Gastrocnemius medialis (tissue), 4 donors: ENCODE measurements at regions of chr4 and their contacts with region 1.

Region 1: DNA sequence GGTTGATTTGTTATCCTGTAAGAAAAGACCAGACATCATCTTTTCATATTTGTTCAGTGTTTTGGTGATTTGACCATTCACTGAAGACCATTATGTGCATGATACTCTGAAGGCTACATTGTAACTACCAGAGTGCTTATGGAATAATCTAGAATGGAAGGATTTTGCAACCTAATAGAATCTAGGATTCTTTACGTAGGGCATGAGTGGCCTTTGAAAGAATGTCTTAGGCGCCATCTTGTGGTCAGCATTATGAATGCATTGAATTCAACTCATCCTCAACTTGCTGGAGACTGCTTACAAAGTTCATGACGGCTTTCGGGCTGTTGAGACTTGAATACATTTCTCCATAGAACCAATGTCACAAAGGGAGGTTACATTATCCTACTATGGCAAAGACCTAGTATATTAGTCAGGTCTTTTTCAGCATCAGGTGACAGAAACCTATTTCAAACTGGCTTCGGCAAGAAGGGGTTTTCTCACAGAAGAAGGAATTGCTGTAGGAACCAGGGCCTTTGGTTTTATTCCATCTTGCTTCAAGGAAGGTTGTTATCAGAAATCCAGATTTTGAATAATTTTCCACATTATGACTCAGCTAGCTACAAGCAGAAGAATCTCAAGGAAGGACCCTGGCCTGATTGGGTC is 104.1 kb downstream of the GPAT3 start:
- DNase-seq: peak; percentile 23 to 41
- ATAC-seq: peak; percentile 89 to 96
- H3K4me3 ChIP-seq: no peak overlapping the region
- H3K27ac ChIP-seq: no peak overlapping the region
- H3K4me1 ChIP-seq: peaks cover 0 to 3% of the 10 kb centered on the region in 2 donors
- H3K27me3 ChIP-seq: no peaks in the 10 kb centered on the region
- CTCF ChIP-seq: peak; percentile 82 to 89 (median 84)
- POLR2A ChIP-seq: no peak

Region 2: GRCh38 chr4:83503974-83504373 is 136.0 kb before region 1 on chr4:
- in situ Hi-C with region 1: no loop called
- intact Hi-C with region 1: loop called (anchors 1 kb)
- DNase-seq: no peak
- ATAC-seq: no peak
- H3K4me3 ChIP-seq: no peak overlapping the region
- H3K27ac ChIP-seq: no peak overlapping the region
- H3K4me1 ChIP-seq: no peaks in the 10 kb centered on the region
- H3K27me3 ChIP-seq: no peaks in the 10 kb centered on the region
- CTCF ChIP-seq: no peak
- POLR2A ChIP-seq: no peak

Region 3: DNA sequence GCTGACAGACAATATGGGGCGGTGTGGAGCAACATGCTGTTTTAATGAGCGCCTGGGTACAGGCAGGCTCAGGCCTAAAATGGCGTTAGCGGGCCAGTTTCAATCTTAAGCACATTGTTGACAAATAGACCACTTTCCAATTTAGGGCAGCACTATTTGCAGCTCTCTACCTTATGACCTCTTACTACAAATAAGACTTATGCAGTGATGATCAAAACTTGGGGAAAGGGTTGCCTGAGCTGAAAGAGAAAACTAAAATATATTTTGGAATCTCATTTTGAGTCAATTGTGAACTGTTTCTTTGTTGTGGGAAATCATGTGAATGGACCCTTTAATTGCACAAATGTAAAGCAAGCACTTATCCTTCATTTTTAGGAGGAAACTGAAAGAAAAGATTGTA is 129.5 kb before region 1 on chr4:
- in situ Hi-C with region 1: loop called (anchors 5 kb)
- intact Hi-C with region 1: loop called (anchors 1 kb)
- DNase-seq: no peak
- ATAC-seq: no peak
- H3K4me3 ChIP-seq: no peak overlapping the region
- H3K27ac ChIP-seq: no peak overlapping the region
- H3K4me1 ChIP-seq: no peaks in the 10 kb centered on the region
- H3K27me3 ChIP-seq: no peaks in the 10 kb centered on the region
- CTCF ChIP-seq: no peak
- POLR2A ChIP-seq: no peak

Region 4: GRCh38 chr4:83701041-83701440 is 61.1 kb after region 1 on chr4:
- in situ Hi-C with region 1: no loop called
- intact Hi-C with region 1: no loop called
- DNase-seq: no peak
- ATAC-seq: no peak
- H3K4me3 ChIP-seq: no peak overlapping the region
- H3K27ac ChIP-seq: no peak overlapping the region
- H3K4me1 ChIP-seq: no peaks in the 10 kb centered on the region
- H3K27me3 ChIP-seq: no peaks in the 10 kb centered on the region
- CTCF ChIP-seq: no peak
- POLR2A ChIP-seq: no peak

Region 5: GRCh38 chr4:83793481-83793880 is 153.5 kb after region 1 on chr4:
- in situ Hi-C with region 1: no loop called
- intact Hi-C with region 1: no loop called
- DNase-seq: no peak
- ATAC-seq: no peak
- H3K4me3 ChIP-seq: no peak overlapping the region
- H3K27ac ChIP-seq: no peak overlapping the region
- H3K4me1 ChIP-seq: no peaks in the 10 kb centered on the region
- H3K27me3 ChIP-seq: no peaks in the 10 kb centered on the region
- CTCF ChIP-seq: no peak
- POLR2A ChIP-seq: no peak

Region 6: DNA sequence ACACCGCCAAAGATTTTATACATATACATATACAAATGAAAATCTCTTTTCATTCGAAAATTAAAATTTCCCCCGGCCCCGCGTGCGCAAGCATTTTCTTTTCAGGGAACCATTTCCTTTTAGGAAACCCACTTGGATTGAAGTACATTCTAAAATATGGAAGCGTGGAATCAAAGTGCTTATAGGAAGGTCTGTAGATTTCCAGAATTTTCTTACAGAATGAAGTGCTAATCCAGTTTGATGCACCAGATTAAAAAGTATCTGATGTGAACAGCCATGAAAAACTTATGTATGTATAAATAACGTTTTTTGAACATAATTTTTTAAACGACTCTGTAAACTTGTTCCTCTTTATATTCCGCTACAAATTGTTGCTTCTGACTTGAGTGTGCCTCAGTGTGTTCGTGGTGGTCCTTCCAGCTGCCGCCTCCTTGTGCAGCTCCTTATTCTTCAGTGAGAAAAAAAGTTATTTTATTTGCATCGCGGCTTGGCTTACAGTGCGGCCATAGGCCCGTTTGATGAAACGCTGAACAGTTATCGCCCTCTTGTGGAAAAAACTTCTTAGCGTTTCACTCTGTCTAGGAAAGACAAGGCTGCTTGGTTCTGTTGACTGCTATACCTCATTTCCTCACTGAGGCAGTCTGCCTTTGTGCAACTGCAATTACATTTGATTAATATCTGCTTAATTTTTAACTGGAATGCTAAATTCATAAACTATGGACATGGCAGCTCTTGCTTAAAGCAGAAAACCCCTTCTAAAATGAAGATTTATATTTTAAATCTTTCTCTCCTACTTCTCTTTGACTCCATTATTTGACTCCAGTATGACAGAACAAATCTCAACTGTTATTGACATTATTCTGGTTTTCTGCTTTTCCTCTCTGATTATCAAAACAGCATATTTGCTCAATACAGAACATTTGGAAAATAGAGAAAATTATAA is 863.8 kb after region 1 on chr4:
- in situ Hi-C with region 1: loop called in 1 of 4 experiments (anchors 10 kb)
- intact Hi-C with region 1: loop called (anchors 2 kb)
- DNase-seq: no peak
- ATAC-seq: peak; percentile 65 to 74
- H3K4me3 ChIP-seq: no peak overlapping the region
- H3K27ac ChIP-seq: no peak overlapping the region
- H3K4me1 ChIP-seq: peaks cover 11 to 12% of the 10 kb centered on the region in 2 donors
- H3K27me3 ChIP-seq: peaks cover 85 to 91% (median 89%) of the 10 kb centered on the region in 3 donors
- CTCF ChIP-seq: peak in 3 of 5 experiments; percentile 24 to 55 (median 49)
- POLR2A ChIP-seq: no peak

Region 7: DNA sequence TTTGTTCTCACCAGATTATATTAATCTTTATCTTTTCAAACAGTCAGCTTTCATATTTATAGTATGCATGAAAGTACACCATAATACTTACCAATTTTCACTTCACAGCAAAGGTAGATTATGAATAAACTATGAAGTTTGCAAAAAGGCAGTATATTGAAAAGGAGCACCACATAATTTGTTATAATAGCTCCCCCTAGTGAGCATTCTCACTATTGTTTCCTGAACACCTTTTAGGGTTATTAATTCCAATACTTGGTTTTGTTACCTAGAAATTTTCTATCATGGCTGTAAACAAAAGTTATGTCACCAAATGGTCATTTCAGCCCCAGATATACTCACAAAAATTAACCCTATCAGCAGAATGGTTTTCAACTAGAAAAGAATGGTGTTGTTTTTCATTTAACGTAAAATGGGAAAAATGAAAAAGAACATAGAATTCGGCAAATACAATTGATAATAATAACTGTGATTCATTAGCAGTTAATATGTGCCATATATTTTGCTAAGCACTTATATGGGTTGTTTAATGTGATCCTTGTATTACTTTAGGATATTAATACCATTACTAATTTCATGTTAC is 889.3 kb after region 1 on chr4:
- in situ Hi-C with region 1: loop called in 1 of 4 experiments (anchors 10 kb)
- intact Hi-C with region 1: no loop called
- DNase-seq: no peak
- ATAC-seq: no peak
- H3K4me3 ChIP-seq: no peak overlapping the region
- H3K27ac ChIP-seq: no peak overlapping the region
- H3K4me1 ChIP-seq: no peaks in the 10 kb centered on the region
- H3K27me3 ChIP-seq: peaks cover 0 to 4% (median 0%) of the 10 kb centered on the region in 3 donors
- CTCF ChIP-seq: peak in 3 of 5 experiments; percentile 8 to 57 (median 37)
- POLR2A ChIP-seq: no peak